ENCODE measurements at regions of chr7 and their contacts with region 1.

Region 1: DNA sequence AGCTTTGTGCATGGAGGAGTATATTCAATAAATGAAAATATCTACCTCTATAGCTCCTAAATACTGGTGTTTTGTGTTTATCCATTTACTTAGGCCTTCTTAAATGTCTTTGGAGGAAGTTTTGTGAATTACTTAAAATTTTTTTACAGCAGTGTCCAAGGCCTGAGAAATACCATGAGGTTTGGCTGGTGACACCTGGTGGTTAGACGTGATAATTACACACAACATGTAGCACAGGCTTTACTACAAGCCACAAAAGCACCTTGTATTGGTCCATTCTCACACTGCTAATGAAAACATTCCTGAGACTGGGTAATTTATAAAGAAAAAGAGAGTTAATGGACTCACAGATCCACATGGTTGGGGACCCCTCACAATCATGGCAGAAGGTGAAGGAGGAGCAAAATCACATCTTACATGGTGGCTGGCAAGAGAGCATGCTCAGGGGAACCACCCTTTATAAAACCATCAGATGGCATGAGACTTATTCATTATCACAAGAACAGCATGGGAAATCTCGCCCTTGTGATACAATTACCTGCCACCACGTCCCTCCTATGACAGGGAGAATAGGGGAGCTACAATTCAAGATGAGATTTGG is 20.6 kb downstream of the HYAL4 start:
- DNase-seq: peak in 2 of 4 donors; percentile 48 to 76
- ATAC-seq: peak; percentile 98
- H3K4me3 ChIP-seq: no peak overlapping the region
- H3K27ac ChIP-seq: no peak overlapping the region
- H3K4me1 ChIP-seq: no peaks in the 10 kb centered on the region
- H3K27me3 ChIP-seq: no peaks in the 10 kb centered on the region
- CTCF ChIP-seq: peak; percentile 68 to 72

Region 2: GRCh38 chr7:123682690-123683089 is 182.9 kb before region 1 on chr7:
- intact Hi-C with region 1: loop called in 1 of 2 experiments (anchors 10 kb)
- DNase-seq: peak in 2 of 4 donors; percentile 32 to 57
- ATAC-seq: peak; percentile 78
- H3K4me3 ChIP-seq: no peak overlapping the region
- H3K27ac ChIP-seq: no peak overlapping the region
- H3K4me1 ChIP-seq: peaks cover 0 to 6% of the 10 kb centered on the region in 2 donors
- H3K27me3 ChIP-seq: no peaks in the 10 kb centered on the region
- CTCF ChIP-seq: peak; percentile 15 to 29

Region 3: DNA sequence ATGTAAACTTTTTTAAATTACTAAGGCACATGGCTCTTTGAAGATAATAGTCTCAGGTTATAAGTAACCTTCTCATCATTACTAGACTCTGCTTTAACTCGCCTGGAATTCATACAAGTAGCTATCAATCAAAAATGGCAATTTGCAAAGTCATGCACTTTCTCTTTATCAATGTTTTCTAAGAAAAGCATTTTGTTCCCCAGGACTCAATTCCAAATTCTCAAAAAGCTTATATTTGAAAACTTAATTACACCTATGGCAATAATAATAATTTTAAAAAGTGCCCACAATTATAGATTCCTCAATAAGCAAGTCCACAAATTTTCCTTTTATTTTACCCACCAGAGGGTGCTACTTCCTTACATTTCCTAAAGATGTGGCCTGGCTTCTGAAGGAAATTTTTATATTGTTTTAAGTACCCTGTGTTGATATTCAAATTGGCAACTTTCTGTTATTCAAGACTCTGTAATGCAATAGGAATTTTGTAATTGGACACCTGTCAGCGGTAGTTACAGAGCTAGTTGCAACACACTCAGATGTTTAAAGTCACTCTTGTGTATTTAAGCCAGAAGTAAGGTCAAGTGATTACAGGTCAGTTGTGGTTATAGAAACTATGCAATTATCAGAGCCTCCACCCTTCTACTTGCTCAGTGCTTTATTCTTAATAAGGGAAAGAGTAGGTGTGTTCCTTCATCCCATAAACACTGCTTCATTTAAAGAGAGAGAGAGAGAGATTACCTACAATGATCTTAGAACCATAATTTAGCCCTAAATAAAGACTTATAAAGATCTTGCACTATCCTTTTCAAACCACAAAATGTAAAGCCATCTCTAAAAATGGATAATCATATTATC is 67.7 kb before region 1 on chr7:
- intact Hi-C with region 1: loop called in 1 of 2 experiments (anchors 10 kb)
- DNase-seq: peak in 2 of 4 donors; percentile 49 to 78
- ATAC-seq: peak; percentile 96
- H3K4me3 ChIP-seq: peak overlapping the region in 1 of 2 donors; percentile 8
- H3K27ac ChIP-seq: peak overlapping the region; percentile 72 to 73
- H3K4me1 ChIP-seq: no peaks in the 10 kb centered on the region
- H3K27me3 ChIP-seq: no peaks in the 10 kb centered on the region
- CTCF ChIP-seq: peak; percentile 33 to 40

Region 4: GRCh38 chr7:124330731-124331407 is 465.3 kb after region 1 on chr7:
- intact Hi-C with region 1: no loop called
- DNase-seq: no peak
- ATAC-seq: no peak
- H3K4me3 ChIP-seq: no peak overlapping the region
- H3K27ac ChIP-seq: no peak overlapping the region
- H3K4me1 ChIP-seq: no peaks in the 10 kb centered on the region
- H3K27me3 ChIP-seq: no peaks in the 10 kb centered on the region
- CTCF ChIP-seq: no peak

Measured in left lung (tissue), 14 donors.